Caco-2 (cell line): ENCODE measurements at regions of chr19 and their contacts with region 1.

Region 1: GRCh38 chr19:50368649-50369570 is 3.5 kb upstream of the NAPSA start:
- DNase-seq: peak; percentile 82 to 88
- H3K4me3 ChIP-seq: peak overlapping the region; percentile 36
- H3K4me3 Mint-ChIP-seq: peak overlapping the region; percentile 77
- H3K27ac Mint-ChIP-seq: peak overlapping the region; percentile 85
- H3K4me1 ChIP-seq: no peaks in the 10 kb centered on the region
- H3K4me1 Mint-ChIP-seq: peaks cover 9% of the 10 kb centered on the region
- H3K27me3 ChIP-seq: no peaks in the 10 kb centered on the region
- H3K27me3 Mint-ChIP-seq: peaks cover 3% of the 10 kb centered on the region
- CTCF ChIP-seq: peak; percentile 84 to 92

Region 2: DNA sequence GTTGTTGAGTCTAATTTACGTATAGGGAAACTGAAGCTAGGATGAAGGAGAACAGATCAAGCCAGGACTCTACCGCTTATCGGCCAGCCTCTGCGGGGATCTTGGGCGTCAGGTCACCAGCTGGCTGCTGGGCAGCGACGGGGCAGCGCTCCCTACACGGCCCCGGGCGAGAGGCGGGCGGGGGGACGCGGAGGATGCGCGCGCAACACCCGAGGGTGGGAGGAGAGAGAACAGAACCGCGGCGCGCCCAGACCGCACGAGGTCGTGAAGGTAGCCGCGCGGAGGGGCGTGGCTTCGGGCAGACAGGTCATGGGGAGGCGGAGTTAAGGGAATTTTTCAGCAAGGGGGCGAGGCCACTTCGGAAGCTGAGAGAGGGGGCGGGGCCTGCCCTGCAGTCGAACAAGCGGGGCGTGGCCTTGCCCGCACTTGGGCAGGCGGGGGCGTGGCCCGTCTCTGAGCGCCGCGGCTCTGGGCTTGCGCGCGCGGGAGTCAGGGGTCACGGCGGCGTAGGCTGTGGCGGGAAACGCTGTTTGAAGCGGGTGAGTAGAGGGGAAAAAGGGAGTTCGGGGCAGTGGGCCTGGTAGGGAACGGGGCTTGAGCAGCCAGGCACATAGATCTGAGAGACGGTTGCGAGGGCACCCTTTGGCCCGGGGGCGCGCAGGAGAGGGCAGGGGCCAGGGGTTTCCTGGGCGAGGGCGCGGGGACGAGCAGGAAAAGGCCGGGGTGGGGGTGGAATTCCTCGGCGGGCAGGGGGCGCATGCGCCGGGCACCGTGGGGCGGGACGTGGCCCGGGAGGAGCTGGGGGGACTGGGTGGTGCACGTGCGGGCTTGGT is 15.2 kb after region 1 on chr19 and contains the start of gene POLD1:
- CTCF ChIA-PET with region 1: interaction called, 20 read pairs
- POLR2A ChIA-PET with region 1: interaction called, 3 read pairs
- intact Hi-C with region 1: no loop called
- DNase-seq: peak; percentile 99 to 100
- H3K4me3 ChIP-seq: peak within 1 kb of the TSS; percentile 72
- H3K4me3 Mint-ChIP-seq: peak within 1 kb of the TSS; percentile 86
- H3K27ac Mint-ChIP-seq: peak within 1 kb of the TSS; percentile 91
- H3K4me1 ChIP-seq: peaks cover 6% of the 10 kb centered on the region; the same call in 1 of the 2 replicates
- H3K4me1 Mint-ChIP-seq: peaks cover 10% of the 10 kb centered on the region
- H3K27me3 ChIP-seq: no peaks in the 10 kb centered on the region
- H3K27me3 Mint-ChIP-seq: no peaks in the 10 kb centered on the region
- CTCF ChIP-seq: no peak
- total RNA-seq, gene POLD1: 128 TPM in 2 replicates

Region 3: DNA sequence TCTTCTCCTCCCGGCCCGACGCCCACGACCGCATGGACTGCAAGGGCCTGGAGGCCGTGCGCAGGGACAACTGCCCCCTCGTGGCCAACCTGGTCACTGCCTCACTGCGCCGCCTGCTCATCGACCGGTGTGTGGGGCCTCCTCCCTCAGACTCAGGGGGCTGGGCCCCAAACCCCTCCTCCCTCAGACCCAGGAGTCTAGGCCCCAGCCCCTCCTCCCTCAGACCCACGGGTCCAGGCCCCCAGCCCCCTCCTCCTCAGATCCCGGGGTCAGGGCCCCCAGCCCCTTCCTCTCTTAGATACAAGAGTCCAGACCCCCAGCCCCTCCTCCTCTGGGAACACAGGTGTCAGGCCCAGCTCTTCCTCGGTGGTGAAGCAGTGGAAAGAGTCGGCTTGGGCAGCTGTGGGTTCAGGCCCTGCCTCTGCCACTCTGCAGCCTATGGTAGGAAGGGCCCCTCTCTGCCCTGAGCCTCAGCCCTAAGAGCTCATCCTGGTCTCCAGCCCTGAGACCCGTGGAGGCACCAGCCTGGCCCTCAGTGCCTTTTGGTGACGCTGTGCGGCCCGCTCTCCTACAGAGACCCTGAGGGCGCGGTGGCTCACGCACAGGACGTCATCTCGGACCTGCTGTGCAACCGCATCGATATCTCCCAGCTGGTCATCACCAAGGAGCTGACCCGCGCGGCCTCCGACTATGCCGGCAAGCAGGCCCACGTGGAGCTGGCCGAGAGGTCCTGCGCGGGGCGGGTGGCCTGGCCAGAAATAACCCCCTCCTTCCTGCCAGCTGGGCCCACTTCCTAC is 46.2 kb after region 1 on chr19:
- CTCF ChIA-PET with region 1: interaction called, 7 read pairs
- POLR2A ChIA-PET with region 1: no interaction called
- intact Hi-C with region 1: loop called (anchors 1 kb)
- DNase-seq: peak; percentile 69 to 78
- H3K4me3 ChIP-seq: no peak overlapping the region
- H3K4me3 Mint-ChIP-seq: no peak overlapping the region
- H3K27ac Mint-ChIP-seq: no peak overlapping the region
- H3K4me1 ChIP-seq: peaks cover 16% of the 10 kb centered on the region
- H3K4me1 Mint-ChIP-seq: peaks cover 11% of the 10 kb centered on the region
- H3K27me3 ChIP-seq: no peaks in the 10 kb centered on the region
- H3K27me3 Mint-ChIP-seq: no peaks in the 10 kb centered on the region
- CTCF ChIP-seq: peak; percentile 75 to 78

Region 4: GRCh38 chr19:50556282-50557008 is 187.5 kb after region 1 on chr19:
- CTCF ChIA-PET with region 1: interaction called, 4 read pairs
- POLR2A ChIA-PET with region 1: no interaction called
- intact Hi-C with region 1: loop called (anchors 2 kb)
- DNase-seq: peak; percentile 92 to 93
- H3K4me3 ChIP-seq: peak overlapping the region; percentile 45
- H3K4me3 Mint-ChIP-seq: peak overlapping the region; percentile 75
- H3K27ac Mint-ChIP-seq: peak overlapping the region; percentile 20
- H3K4me1 ChIP-seq: peaks cover 11% of the 10 kb centered on the region
- H3K4me1 Mint-ChIP-seq: peaks cover 6% of the 10 kb centered on the region
- H3K27me3 ChIP-seq: no peaks in the 10 kb centered on the region; the same call in 1 of the 2 replicates
- H3K27me3 Mint-ChIP-seq: peaks cover 19% of the 10 kb centered on the region
- CTCF ChIP-seq: peak; percentile 90 to 93

Region 5: DNA sequence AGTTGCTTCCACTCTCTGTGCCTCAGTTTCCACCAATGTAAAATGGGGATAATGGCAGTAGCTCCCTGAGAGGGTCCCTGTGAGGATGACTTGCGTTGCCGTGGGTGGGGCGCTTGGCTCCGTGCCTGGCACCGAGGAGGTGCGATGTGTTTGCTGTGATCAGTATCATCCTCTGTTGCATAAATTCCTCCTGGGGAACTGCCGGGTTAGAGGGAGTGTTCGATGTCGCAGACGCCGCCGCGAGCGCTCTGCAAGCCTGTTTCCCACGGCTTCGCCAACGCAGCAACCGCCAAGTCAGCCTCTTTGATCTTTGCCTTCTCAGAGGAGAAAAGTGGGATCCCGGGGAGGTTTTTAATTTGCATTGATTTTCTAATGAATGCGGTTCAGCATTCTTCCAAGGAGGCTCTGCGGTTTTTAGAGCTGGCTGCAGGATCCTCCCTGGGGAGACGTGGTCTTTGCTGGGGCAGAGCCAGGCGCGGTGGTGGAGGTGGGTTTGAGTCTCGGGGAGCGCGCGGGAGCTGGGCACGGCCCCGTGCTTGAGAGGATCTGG is 408.9 kb after region 1 on chr19:
- CTCF ChIA-PET with region 1: interaction called, 3 read pairs
- POLR2A ChIA-PET with region 1: no interaction called
- intact Hi-C with region 1: loop called (anchors 2 kb)
- DNase-seq: no peak
- H3K4me3 ChIP-seq: no peak overlapping the region
- H3K4me3 Mint-ChIP-seq: no peak overlapping the region
- H3K27ac Mint-ChIP-seq: no peak overlapping the region
- H3K4me1 ChIP-seq: peaks cover 7% of the 10 kb centered on the region; the same call in 1 of the 2 replicates
- H3K4me1 Mint-ChIP-seq: no peaks in the 10 kb centered on the region
- H3K27me3 ChIP-seq: no peaks in the 10 kb centered on the region
- H3K27me3 Mint-ChIP-seq: peaks cover 30% of the 10 kb centered on the region
- CTCF ChIP-seq: no peak

Region 6: DNA sequence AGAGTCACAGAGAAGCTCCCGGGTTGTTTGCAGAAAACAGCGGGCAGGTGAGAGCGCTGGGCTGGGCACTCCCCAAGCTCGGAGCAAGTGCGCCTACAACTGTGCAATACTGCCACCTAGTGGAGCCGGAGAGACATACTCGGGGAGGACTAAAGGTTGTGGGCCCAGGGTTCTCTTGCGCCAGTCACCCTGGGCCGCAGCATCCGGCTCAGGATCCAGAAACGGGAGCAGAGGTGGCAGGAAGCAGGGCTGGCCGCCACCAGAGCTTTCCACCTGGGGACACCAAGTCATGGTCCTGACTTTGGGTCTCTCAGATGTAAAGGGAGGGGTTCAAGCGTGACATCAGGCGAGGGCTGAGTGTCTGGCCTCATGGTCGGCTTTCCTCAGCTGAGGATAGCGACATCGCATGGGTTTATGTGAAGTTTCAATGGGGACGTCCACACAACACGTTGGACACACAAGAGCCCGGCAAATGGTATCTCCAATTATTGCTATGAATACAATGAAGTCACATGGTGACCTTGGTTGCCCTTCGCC is 553.5 kb after region 1 on chr19:
- CTCF ChIA-PET with region 1: no interaction called
- POLR2A ChIA-PET with region 1: no interaction called
- intact Hi-C with region 1: loop called (anchors 10 kb)
- DNase-seq: peak; percentile 80 to 86
- H3K4me3 ChIP-seq: no peak overlapping the region
- H3K4me3 Mint-ChIP-seq: no peak overlapping the region
- H3K27ac Mint-ChIP-seq: no peak overlapping the region
- H3K4me1 ChIP-seq: no peaks in the 10 kb centered on the region
- H3K4me1 Mint-ChIP-seq: no peaks in the 10 kb centered on the region
- H3K27me3 ChIP-seq: no peaks in the 10 kb centered on the region; the same call in 1 of the 2 replicates
- H3K27me3 Mint-ChIP-seq: peaks cover 17% of the 10 kb centered on the region
- CTCF ChIP-seq: peak; percentile 86 to 93